Common myeloid progenitor, CD34-positive (primary cell): ENCODE measurements at regions of chr12 and their contacts with region 1.

Region 1: DNA sequence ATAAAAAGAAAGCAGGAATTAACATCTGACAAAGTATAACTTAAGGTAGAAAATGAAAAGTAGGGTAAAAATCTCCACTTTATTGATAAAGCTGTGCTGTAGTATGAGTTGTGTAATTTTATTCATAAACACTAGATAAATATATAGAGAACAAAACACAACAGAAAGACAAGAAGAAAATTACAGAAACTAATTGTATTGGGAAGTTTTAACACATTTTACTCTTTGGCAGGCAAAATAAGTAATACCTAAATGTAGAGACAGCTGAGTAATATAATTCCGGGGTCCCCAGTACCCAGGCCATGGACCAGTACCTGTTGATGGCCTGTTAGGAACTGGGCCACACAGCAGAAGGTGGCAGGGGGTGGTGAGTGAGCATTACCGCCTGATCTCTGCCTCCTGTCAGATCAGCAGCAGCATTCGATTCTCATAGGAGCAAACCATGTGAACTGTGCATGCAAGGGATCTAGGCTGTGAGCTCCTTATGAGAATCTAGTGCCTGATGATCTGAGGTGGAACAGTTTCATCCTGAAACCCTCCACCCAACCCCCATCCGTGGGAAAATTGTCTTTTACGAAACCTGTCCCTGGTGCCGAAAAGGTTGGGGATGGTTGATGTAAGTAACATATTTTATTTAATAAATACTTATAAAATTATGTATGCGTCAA is 84.4 kb upstream of the ETV6 start:
- DNase-seq: no peak
- H3K4me3 ChIP-seq: no peak overlapping the region
- H3K27ac ChIP-seq: no peak overlapping the region
- H3K4me1 ChIP-seq: no peaks in the 10 kb centered on the region
- H3K27me3 ChIP-seq: no peaks in the 10 kb centered on the region

Region 2: DNA sequence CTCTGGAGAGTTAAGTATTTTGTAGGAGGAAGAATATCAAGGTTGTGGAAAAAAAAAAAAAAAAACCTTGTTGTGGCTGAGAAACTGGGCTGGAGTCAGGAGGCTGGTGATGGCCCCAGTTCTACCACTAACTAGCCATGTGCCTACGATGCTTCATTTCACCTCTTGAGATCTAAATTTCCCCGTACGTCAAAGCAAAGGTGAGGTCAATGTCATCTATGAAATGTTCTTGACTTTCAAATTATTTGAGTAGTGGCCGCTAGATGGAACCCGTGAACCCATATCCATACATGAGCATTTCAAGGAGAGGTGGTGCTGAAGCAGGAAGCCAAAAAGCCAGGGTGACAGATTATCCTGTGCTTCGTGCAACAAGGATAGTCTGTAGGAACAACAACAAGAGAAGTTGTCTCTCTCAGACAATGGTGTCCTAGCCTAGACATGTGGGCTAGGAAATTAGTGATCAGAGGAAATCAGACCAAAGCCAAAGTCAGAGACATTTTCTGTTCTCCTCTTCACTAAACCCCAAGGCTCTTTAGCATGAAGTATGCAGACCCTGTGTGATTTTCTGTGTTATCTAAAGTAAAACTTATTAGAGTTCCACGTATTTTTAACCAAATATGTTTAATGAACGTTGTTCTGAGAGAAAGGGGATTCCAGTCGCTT is 11.1 kb before region 1 on chr12:
- CTCF ChIA-PET with region 1: interaction called, 13 read pairs
- POLR2A ChIA-PET with region 1: interaction called, 3 read pairs
- DNase-seq: peak; percentile 72 to 78 (median 77)
- H3K4me3 ChIP-seq: peak overlapping the region in 1 of 7 experiments; percentile 3
- H3K27ac ChIP-seq: no peak overlapping the region
- H3K4me1 ChIP-seq: peaks cover 2 to 23% (median 7%) of the 10 kb centered on the region in 4 experiments
- H3K27me3 ChIP-seq: no peaks in the 10 kb centered on the region